HepG2 (cell line): ENCODE measurements at regions of chr5 and their contacts with region 1.

Region 1: GRCh38 chr5:92518318-92518904 is 1062.6 kb downstream of the NR2F1-AS1 start:
- DNase-seq: peak; percentile 12
- ATAC-seq: peak; percentile 98
- H3K4me3 ChIP-seq: no peak overlapping the region
- H3K27ac ChIP-seq: no peak overlapping the region
- H3K4me1 ChIP-seq: no peaks in the 10 kb centered on the region
- H3K27me3 ChIP-seq: no peaks in the 10 kb centered on the region
- CTCF ChIP-seq: peak; percentile 65
- EP300 ChIP-seq: no peak
- POLR2A ChIP-seq: no peak
- RAD21 ChIP-seq: no peak

Region 2: GRCh38 chr5:92070786-92071185 is 447.6 kb before region 1 on chr5:
- CTCF ChIA-PET with region 1: no interaction called
- POLR2A ChIA-PET with region 1: no interaction called
- in situ Hi-C with region 1: no loop called
- intact Hi-C with region 1: no loop called
- DNase-seq: no peak
- ATAC-seq: no peak
- H3K4me3 ChIP-seq: no peak overlapping the region
- H3K27ac ChIP-seq: no peak overlapping the region
- H3K4me1 ChIP-seq: no peaks in the 10 kb centered on the region
- H3K27me3 ChIP-seq: no peaks in the 10 kb centered on the region
- CTCF ChIP-seq: no peak
- EP300 ChIP-seq: no peak
- POLR2A ChIP-seq: no peak
- RAD21 ChIP-seq: no peak

Region 3: DNA sequence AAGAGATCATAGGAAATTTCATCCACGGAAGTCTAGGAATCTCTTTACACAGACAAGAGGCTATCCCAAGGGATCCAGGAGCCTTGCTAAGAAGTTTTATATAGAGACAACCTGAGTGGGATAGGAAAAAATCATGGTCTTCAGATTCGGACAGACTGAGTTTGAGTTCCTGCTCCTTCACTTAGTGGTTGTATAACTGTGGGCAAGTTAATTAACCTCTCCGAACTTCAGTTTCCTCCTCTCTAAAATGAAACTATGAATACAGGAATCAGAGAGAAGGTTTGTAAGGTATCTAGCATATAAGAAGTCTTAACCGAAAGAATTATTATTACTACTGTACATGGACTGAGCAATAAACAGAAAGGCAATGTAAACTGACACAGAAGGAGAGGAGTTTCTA is 1027.5 kb after region 1 on chr5:
- CTCF ChIA-PET with region 1: no interaction called
- POLR2A ChIA-PET with region 1: no interaction called
- in situ Hi-C with region 1: no loop called
- intact Hi-C with region 1: loop called (anchors 5 kb)
- DNase-seq: no peak
- ATAC-seq: no peak
- H3K4me3 ChIP-seq: no peak overlapping the region
- H3K27ac ChIP-seq: no peak overlapping the region
- H3K4me1 ChIP-seq: no peaks in the 10 kb centered on the region
- H3K27me3 ChIP-seq: no peaks in the 10 kb centered on the region
- CTCF ChIP-seq: no peak
- EP300 ChIP-seq: no peak
- POLR2A ChIP-seq: no peak
- RAD21 ChIP-seq: no peak